ENCODE measurements at regions of chr2 and their contacts with region 1.

Region 1: DNA sequence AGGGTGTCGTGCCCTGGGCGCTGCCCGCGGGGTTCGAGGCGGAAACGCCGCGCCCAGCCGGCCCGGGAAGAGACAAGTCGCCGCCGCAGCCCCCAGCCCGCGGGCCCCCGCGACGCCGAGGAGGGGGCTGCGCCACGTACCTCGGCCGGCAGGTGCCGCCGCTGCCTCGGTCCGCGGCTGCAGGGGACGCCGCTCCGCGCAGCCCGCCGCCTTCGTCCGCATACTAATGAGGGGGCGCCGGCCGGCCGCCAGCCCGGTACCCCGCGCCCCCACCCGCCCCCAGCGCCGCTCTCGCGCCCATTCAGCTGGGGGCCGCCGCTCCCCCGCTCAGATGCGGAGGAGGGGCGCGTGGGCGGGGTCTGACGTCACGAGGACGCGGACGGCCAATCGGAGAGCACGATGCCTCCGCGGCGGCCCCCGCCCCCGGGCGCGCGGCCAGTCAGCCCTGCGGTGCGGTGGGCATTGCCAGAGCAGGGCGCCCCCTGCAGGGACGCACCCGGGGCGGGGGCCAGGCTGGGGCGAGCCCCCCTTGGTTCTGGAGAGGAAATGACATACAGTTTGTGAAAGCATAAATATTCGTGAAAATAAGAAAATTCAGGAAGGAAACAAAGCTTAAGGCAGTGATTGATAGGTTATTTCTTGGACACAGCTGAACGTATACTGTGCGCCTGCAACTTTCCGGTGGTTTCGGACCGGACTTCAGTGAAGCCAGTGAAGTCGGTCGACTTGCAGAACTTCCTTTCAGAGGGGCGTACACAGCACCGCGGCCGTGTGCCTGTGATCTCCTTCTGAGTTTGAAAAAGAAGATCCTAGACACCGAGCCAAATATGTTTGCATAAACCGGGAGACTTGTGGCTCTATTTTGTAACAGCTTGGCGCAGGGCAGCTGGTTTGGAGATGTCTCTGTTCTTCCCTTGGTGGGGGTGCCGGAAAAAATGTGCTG is at the start of gene ST3GAL5:
- DNase-seq: peak; percentile 84 to 98 (median 95)
- ATAC-seq: peak; percentile 85
- H3K4me3 ChIP-seq: peak within 1 kb of the TSS; percentile 89 to 96
- H3K4me3 Mint-ChIP-seq: peak within 1 kb of the TSS; percentile 95
- H3K27ac ChIP-seq: peak within 1 kb of the TSS; percentile 83 to 84
- H3K27ac Mint-ChIP-seq: peak within 1 kb of the TSS; percentile 97
- H3K4me1 ChIP-seq: peaks cover 59% of the 10 kb centered on the region
- H3K4me1 Mint-ChIP-seq: peaks cover 77% of the 10 kb centered on the region
- H3K27me3 ChIP-seq: no peaks in the 10 kb centered on the region
- H3K27me3 Mint-ChIP-seq: no peaks in the 10 kb centered on the region
- CTCF ChIP-seq: peak; percentile 71
- total RNA-seq, gene ST3GAL5: 110 to 115 TPM

Region 2: GRCh38 chr2:85852937-85853498 is 35.9 kb before region 1 on chr2:
- CTCF ChIA-PET with region 1: interaction called, 50 read pairs
- POLR2A ChIA-PET with region 1: interaction called, 83 read pairs
- intact Hi-C with region 1: loop called (anchors 1 kb)
- DNase-seq: peak; percentile 59 to 93 (median 81)
- ATAC-seq: peak; percentile 89
- H3K4me3 ChIP-seq: peak overlapping the region; percentile 48 to 49
- H3K4me3 Mint-ChIP-seq: peak overlapping the region; percentile 85
- H3K27ac ChIP-seq: peak overlapping the region; percentile 87 to 97
- H3K27ac Mint-ChIP-seq: peak overlapping the region; percentile 99
- H3K4me1 ChIP-seq: peaks cover 63% of the 10 kb centered on the region
- H3K4me1 Mint-ChIP-seq: peaks cover 73% of the 10 kb centered on the region
- H3K27me3 ChIP-seq: no peaks in the 10 kb centered on the region
- H3K27me3 Mint-ChIP-seq: no peaks in the 10 kb centered on the region
- CTCF ChIP-seq: no peak

Region 3: DNA sequence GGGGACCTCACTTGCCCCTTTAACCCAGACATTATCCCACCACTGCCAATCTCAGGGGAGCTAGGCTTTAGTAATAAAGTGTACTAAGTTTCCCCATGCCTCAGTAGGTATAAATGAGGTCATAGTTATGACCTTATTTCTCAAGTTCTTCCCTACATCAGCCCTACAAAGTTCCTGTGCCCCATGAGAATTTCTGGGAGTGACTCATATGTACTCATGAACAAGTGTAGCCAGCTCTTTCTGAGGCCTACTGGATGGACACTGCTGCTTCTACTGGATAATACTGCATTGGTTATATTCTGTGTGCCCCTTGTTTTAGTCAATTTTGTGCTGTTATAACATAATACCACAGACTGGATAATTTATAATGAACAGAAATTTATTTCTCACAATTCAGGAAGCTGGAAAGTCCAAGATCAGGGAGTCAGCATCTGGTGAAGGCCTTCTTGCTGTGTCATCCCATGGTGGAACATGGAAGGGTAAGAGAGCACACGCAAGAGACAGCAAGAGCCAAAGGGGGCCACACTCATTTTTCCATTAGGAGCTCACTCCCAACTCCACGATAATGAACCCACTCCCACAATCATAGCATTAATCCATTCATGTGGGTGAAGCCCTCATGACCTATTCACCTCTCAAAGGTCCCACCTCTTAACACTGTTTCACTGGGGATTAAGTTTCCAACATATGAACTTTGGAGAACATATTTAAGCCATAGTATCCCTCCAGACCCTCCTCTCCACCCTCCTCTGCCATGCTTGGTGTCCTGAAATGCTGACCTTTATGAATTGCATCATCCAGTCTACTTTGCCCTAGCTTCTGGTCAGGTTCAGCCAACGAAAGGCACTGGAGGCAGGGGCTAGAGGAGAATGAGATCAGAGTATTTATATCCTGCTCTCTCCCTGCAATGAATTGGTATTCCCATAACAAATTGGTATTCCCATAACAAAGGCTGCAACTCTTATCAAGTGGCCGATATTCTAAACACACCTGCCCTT is 25.2 kb after region 1 on chr2:
- CTCF ChIA-PET with region 1: interaction called, 10 read pairs
- POLR2A ChIA-PET with region 1: no interaction called
- intact Hi-C with region 1: no loop called
- DNase-seq: no peak
- ATAC-seq: no peak
- H3K4me3 ChIP-seq: no peak overlapping the region
- H3K4me3 Mint-ChIP-seq: no peak overlapping the region
- H3K27ac ChIP-seq: no peak overlapping the region
- H3K27ac Mint-ChIP-seq: no peak overlapping the region
- H3K4me1 ChIP-seq: no peaks in the 10 kb centered on the region
- H3K4me1 Mint-ChIP-seq: no peaks in the 10 kb centered on the region
- H3K27me3 ChIP-seq: no peaks in the 10 kb centered on the region
- H3K27me3 Mint-ChIP-seq: no peaks in the 10 kb centered on the region
- CTCF ChIP-seq: no peak

Region 4: DNA sequence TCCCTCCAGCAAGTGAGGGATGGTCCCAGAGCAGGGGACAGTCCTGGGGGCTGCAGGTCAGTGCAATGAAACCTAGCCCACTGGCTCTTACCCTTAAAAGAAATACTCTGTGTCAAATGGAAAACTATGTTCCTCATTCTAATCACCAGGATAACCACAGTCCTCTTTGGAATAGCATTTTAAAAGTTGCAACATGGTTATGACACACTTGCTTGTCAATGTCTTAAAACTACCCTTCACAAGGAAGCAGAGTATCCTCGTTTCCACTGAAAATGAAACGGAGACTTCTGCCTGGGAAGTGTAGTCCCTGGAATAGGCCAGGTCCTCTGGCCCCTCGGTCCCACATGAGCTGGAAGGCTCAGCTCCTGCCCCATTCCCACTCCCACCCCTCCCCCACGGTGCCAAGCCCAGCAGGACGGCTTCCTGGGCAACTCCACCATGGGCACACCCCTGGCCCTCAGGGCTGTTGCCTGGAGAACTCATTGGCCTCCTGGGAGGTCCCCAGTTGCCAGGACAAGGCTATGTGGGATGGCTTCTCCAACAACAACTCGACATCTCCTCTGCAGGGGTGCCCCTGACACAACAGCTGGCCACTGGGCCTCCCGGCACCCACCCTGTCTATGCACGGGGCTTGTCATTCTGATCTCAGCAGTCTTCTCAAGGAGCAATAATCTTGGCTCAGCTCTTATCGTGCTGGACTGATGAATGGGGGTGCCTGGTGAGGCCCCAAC is 38.1 kb after region 1 on chr2:
- CTCF ChIA-PET with region 1: interaction called, 19 read pairs
- POLR2A ChIA-PET with region 1: interaction called, 3 read pairs
- intact Hi-C with region 1: no loop called
- DNase-seq: no peak
- ATAC-seq: no peak
- H3K4me3 ChIP-seq: no peak overlapping the region
- H3K4me3 Mint-ChIP-seq: no peak overlapping the region
- H3K27ac ChIP-seq: no peak overlapping the region
- H3K27ac Mint-ChIP-seq: no peak overlapping the region
- H3K4me1 ChIP-seq: no peaks in the 10 kb centered on the region
- H3K4me1 Mint-ChIP-seq: peaks cover 25% of the 10 kb centered on the region
- H3K27me3 ChIP-seq: no peaks in the 10 kb centered on the region
- H3K27me3 Mint-ChIP-seq: peaks cover 5% of the 10 kb centered on the region
- CTCF ChIP-seq: no peak

Region 5: DNA sequence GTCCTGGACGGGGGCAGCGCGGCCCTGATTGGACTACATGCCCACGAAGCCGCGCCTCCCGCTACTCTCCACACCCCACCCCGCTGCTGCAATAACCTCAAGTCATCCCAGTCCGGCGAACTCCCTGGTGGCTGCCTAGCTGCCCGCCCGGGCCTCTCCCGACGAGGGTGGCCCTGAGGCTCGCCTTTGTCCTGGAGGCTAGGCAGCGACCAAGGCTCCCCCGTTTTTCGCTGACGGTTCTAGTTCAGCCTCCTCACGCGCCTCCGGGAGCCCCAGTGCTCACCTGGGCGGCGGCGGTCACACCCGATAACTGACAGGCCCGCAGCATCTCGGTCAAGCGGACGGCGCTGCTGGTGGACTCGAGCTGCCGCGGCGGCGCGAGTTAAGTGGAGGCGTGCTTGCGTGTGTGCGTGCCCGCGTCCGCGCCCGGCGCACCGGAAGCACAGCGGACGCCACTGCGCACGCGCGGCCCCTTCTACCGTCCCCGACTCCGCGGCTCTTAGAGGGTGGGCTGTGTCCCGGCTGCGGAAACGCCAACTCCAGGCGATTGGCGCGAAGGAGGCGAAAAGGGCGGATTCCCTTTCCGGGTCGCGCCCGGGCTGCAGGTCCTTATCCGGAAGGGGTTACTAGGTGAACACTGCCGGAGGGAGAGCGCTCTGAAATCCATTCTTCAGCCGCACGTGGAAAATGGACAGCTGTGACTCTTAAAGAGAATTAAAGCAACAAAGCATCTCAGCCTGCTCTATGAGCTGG is 306.3 kb after region 1 on chr2 and contains the start of gene IMMT:
- CTCF ChIA-PET with region 1: no interaction called
- POLR2A ChIA-PET with region 1: no interaction called
- intact Hi-C with region 1: loop called (anchors 1 to 10 kb)
- DNase-seq: peak; percentile 79 to 97 (median 93)
- ATAC-seq: peak; percentile 90
- H3K4me3 ChIP-seq: peak within 1 kb of the TSS; percentile 96 to 98
- H3K4me3 Mint-ChIP-seq: peak within 1 kb of the TSS; percentile 89
- H3K27ac ChIP-seq: peak within 1 kb of the TSS; percentile 91 to 98
- H3K27ac Mint-ChIP-seq: peak within 1 kb of the TSS; percentile 90
- H3K4me1 ChIP-seq: peaks cover 37% of the 10 kb centered on the region
- H3K4me1 Mint-ChIP-seq: peaks cover 63% of the 10 kb centered on the region
- H3K27me3 ChIP-seq: no peaks in the 10 kb centered on the region
- H3K27me3 Mint-ChIP-seq: no peaks in the 10 kb centered on the region
- CTCF ChIP-seq: no peak
- total RNA-seq, gene IMMT: 34.3 to 35.8 TPM

Region 6: GRCh38 chr2:86283411-86284030 is 394.6 kb after region 1 on chr2:
- CTCF ChIA-PET with region 1: no interaction called
- POLR2A ChIA-PET with region 1: no interaction called
- intact Hi-C with region 1: no loop called
- DNase-seq: no peak
- ATAC-seq: no peak
- H3K4me3 ChIP-seq: no peak overlapping the region
- H3K4me3 Mint-ChIP-seq: no peak overlapping the region
- H3K27ac ChIP-seq: no peak overlapping the region
- H3K27ac Mint-ChIP-seq: no peak overlapping the region
- H3K4me1 ChIP-seq: no peaks in the 10 kb centered on the region
- H3K4me1 Mint-ChIP-seq: no peaks in the 10 kb centered on the region
- H3K27me3 ChIP-seq: no peaks in the 10 kb centered on the region
- H3K27me3 Mint-ChIP-seq: peaks cover 16% of the 10 kb centered on the region
- CTCF ChIP-seq: no peak

Measured in CD8-positive, alpha-beta T cell (primary cell).